ENCODE measurements at regions of chr15 and their contacts with region 1.

Region 1: GRCh38 chr15:42920519-42921227 is at the start of gene TTBK2:
- DNase-seq: peak; percentile 99
- H3K4me3 ChIP-seq: peak within 1 kb of the TSS; percentile 96 to 98
- H3K27ac ChIP-seq: peak within 1 kb of the TSS; percentile 95 to 97
- H3K4me1 ChIP-seq: no peaks in the 10 kb centered on the region
- H3K27me3 ChIP-seq: no peaks in the 10 kb centered on the region
- CTCF ChIP-seq: peak; percentile 12 to 58 (median 36)
- POLR2A ChIP-seq: peak; percentile 87
- total RNA-seq, gene TTBK2: 20.4 to 30.3 TPM

Region 2: GRCh38 chr15:42691308-42691707 is 229.4 kb before region 1 on chr15:
- intact Hi-C with region 1: no loop called
- DNase-seq: no peak
- H3K4me3 ChIP-seq: no peak overlapping the region
- H3K27ac ChIP-seq: no peak overlapping the region
- H3K4me1 ChIP-seq: no peaks in the 10 kb centered on the region
- H3K27me3 ChIP-seq: no peaks in the 10 kb centered on the region
- CTCF ChIP-seq: no peak
- POLR2A ChIP-seq: no peak

Region 3: DNA sequence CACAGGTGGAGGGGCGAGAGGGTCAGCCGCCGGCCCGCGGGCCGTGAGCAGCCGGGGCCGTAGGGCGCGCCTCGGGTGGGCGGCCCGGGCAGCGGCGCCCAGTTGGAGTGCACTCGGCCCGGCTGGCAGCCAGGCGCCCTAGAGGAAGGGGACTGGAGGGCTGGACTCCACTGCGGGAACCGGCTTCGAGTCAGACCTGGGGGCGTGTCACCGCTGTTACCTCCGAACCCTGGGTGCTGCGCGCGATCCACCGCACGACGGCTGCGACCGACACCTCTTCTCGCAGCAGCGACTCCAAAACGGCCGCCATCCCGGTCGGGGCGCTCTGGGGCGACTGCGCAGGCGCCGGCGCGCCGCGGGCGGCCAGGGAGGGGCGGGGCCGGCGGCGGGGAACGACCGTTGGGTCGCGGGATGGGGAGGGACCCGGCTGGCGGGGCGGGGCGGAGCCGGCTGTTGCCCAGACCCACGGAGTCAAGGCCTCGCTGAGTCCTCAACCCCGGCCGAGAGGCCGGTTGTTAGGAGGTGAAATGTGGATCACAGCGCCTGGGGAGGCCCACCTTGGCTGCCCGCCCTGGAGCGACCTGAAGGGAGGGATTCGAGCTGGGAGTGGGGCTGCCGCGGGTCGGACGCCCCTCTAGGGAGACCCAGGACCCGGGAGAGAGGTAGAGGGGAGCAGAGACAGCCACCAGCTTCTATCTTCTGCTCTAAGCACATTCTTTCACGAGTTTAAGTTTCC is 183.7 kb before region 1 on chr15 and contains the start of gene CDAN1:
- intact Hi-C with region 1: loop called (anchors 10 kb)
- DNase-seq: peak; percentile 88
- H3K4me3 ChIP-seq: peak within 1 kb of the TSS; percentile 87
- H3K27ac ChIP-seq: peak within 1 kb of the TSS; percentile 84 to 89
- H3K4me1 ChIP-seq: no peaks in the 10 kb centered on the region
- H3K27me3 ChIP-seq: no peaks in the 10 kb centered on the region
- CTCF ChIP-seq: peak in 3 of 4 experiments; percentile 15 to 33 (median 31)
- POLR2A ChIP-seq: peak; percentile 86
- total RNA-seq, gene CDAN1: 22.3 to 26.9 TPM

Measured in prostate gland (tissue), 2 donors.